ENCODE measurements at regions of chr5 and their contacts with region 1.

Region 1: DNA sequence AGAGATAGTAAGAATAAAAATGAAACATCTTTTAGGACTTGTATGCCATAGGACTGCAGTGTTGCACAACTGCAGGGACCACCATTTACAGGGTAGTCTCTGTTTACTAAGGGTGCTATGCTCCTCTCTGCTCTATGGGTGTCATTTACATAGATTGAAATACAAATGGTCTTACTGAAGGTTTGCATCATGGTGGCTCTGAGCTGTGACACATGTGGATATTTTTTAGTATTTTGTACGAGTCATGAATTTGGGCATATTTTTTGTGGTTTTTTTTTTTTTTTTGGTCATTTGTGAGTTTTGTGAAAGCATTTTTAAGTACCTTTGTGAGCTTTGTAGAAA is 47.4 kb downstream of the CSNK1G3 start:
- DNase-seq: no peak
- ATAC-seq: no peak
- H3K4me3 Mint-ChIP-seq: no peak overlapping the region
- H3K27ac Mint-ChIP-seq: no peak overlapping the region
- H3K4me1 Mint-ChIP-seq: peaks cover 24% of the 10 kb centered on the region
- H3K27me3 Mint-ChIP-seq: no peaks in the 10 kb centered on the region
- CTCF ChIP-seq: no peak

Region 2: DNA sequence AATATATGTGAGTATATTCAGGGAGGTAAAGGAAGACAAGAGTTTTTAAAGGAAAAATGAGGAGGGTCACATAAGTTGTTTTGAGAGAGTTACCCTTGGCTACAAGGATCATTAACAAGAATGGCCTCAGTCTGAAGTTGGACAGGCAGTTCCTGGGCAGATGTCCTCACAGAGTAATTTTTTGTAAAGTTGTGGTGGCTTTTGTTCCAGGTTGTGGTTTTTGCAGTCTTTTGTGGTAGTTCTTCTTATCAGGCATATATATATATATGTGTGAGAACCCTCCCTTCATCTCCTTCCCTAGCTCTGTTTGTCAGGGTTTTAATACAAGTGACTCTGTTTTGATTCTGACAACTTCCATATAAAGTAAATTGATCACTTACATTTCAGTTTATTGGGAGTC is 12.5 kb after region 1 on chr5:
- CTCF ChIA-PET with region 1: no interaction called
- POLR2A ChIA-PET with region 1: no interaction called
- intact Hi-C with region 1: loop called (anchors 2 kb)
- DNase-seq: no peak
- ATAC-seq: no peak
- H3K4me3 Mint-ChIP-seq: no peak overlapping the region
- H3K27ac Mint-ChIP-seq: peak overlapping the region; percentile 56
- H3K4me1 Mint-ChIP-seq: peaks cover 25% of the 10 kb centered on the region
- H3K27me3 Mint-ChIP-seq: no peaks in the 10 kb centered on the region
- CTCF ChIP-seq: no peak

Region 3: DNA sequence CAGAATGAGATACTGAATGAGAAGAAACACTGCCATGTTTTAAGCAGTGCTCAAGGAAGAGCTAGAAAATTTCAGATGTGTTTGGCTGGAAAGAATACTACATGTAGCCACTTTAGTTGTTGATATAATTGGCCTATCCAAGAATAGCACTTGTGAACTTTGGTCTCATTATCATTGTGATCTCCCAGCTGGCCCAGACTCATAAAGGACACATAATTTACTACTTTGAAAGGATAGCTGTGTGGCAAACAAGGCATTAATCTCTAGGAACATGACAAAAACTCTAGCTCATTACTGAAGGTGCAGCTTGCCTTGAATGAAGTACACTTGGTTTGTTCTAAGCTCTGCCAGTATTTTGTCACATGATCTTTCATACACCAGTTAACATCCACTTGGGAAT is 308.9 kb after region 1 on chr5:
- CTCF ChIA-PET with region 1: no interaction called
- POLR2A ChIA-PET with region 1: no interaction called
- intact Hi-C with region 1: no loop called
- DNase-seq: no peak
- ATAC-seq: no peak
- H3K4me3 Mint-ChIP-seq: no peak overlapping the region
- H3K27ac Mint-ChIP-seq: no peak overlapping the region
- H3K4me1 Mint-ChIP-seq: no peaks in the 10 kb centered on the region
- H3K27me3 Mint-ChIP-seq: no peaks in the 10 kb centered on the region
- CTCF ChIP-seq: no peak